Activated naive CD4-positive, alpha-beta T cell treated with anti-CD3 and anti-CD28 coated beads for 36 hours (primary cell): ENCODE measurements at regions of chr16 and their contacts with region 1.

Region 1: GRCh38 chr16:22190776-22191531 is 15.1 kb upstream of the EEF2K start:
- DNase-seq: peak; percentile 99
- H3K4me3 Mint-ChIP-seq: peak overlapping the region; percentile 83
- H3K27ac Mint-ChIP-seq: peak overlapping the region; percentile 98
- H3K4me1 Mint-ChIP-seq: peaks cover 60% of the 10 kb centered on the region
- H3K27me3 Mint-ChIP-seq: no peaks in the 10 kb centered on the region

Region 2: DNA sequence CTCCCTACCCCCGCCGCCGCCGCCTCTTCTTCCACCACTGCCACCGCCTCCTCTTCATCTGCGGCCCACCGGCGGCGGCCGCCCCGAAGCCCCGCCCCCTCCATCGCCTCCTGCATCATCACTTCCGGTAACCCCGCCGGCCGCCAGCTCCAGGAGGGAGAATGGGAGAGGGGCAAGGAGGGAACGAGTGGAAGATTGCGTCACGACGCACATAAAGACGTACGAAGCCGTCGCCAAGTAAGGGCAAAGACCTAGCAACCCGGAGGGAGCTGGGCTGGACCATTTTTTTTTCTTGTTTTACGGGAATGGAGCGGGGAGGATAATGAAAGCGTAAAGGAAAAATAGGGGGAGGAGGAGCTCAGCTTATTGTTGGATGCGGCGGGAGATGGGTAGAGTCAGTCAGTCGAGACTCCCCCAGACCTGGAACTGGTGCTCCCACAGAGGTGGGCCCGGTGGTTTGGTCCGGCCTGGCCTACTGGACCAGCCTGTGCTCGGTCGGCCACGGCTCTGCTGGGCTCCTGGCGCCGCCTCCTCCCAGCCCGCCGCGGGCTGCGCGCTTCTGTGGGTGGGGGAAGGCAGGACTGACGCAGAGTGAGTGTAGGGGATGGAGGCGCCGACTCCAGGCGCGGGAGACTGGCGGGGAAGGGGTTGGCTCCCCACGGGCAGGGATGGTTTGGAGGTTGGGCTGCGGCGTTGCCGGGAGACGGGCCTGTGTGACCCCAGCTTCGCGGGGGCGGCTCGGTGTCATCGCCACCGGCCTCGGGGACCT is 1290.5 kb before region 1 on chr16 and contains the starts of genes DCUN1D3 and LYRM1:
- CTCF ChIA-PET with region 1: no interaction called
- intact Hi-C with region 1: loop called (anchors 10 kb)
- DNase-seq: peak; percentile 88
- H3K4me3 Mint-ChIP-seq: peak within 1 kb of the TSS; percentile 96
- H3K27ac Mint-ChIP-seq: peak within 1 kb of the TSS; percentile 98
- H3K4me1 Mint-ChIP-seq: peaks cover 59% of the 10 kb centered on the region
- H3K27me3 Mint-ChIP-seq: no peaks in the 10 kb centered on the region
- total RNA-seq, gene DCUN1D3: 3.0 to 3.4 TPM
- total RNA-seq, gene LYRM1: 20.4 to 20.8 TPM

Region 3: DNA sequence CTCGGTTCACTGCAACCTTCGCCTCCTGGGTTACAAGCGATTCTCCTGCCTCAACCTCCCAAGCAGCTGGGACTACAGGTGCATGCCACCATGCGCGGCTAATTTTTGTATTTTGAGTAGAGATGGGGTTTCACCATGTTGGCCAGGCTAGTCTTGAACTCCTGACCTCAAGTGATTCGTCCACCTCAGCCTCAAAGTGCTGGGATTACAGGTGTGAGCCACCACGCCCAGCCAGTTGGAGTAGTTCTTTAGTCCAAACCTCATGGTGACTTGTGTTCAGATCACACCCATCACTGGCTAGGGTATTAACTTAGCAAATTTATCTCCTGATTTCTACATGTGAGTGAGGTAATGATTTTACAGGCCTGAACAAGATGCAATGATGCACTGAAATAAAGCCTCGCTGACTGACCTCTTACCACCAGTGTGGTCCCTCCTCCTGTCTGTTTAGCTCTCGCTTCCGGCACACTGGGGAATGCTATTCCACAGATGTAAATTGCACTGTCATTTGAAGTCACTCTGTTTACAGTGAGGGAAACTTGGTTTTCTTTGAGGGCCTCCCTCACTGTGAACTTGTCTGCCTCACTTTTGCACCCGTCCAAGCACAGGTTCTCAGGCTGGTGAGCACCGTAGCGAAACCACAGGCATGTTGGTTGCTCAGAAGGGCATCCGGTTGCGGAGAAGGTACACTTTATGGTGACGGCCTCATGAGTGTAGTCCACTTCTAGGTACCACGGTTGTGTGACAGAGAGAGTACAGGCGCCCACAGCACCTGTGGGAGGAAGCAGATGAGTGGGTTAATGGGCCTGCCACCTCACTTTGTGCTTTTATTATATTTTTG is 544.0 kb before region 1 on chr16:
- CTCF ChIA-PET with region 1: no interaction called
- intact Hi-C with region 1: loop called (anchors 1 kb)
- DNase-seq: peak; percentile 91
- H3K4me3 Mint-ChIP-seq: peak overlapping the region; percentile 25
- H3K27ac Mint-ChIP-seq: peak overlapping the region; percentile 76
- H3K4me1 Mint-ChIP-seq: peaks cover 49% of the 10 kb centered on the region
- H3K27me3 Mint-ChIP-seq: no peaks in the 10 kb centered on the region

Region 4: DNA sequence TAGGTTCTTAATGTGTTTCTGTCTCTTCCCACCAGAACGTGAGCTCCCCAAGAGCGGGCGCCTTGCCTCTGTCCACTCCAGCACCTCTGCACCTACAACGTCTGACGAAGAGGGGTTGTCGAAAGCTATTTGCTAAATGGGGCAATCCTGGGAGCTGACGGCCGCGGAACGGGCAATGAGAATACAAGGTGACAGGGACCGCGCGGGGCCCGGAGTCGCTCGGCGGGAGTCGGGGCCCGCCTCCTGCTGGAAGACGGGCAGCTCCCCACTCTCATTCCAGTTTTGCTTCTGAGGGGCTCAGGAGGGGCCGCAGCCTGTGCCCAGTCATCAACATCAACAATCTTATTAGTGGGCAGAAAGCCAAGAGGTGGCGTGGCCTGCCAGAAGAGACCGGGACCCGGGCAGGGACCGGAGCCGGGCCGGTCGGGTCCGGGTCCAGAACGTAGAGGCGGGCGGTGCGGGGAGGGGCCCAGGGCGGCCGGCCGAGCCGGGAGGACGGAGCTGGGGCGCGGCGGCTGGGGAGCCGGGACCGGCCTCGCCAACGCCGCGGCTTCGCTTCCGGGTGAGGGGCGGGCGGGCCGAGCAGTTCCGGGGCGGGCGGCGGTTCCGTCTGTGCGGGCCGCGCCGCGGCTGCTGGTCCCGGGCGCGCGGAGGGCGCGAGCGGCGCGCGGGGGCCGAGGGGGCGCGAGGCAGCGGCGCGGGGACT is 183.3 kb before region 1 on chr16 and contains the start of gene MOSMO:
- CTCF ChIA-PET with region 1: interaction called, 33 read pairs
- intact Hi-C with region 1: no loop called
- DNase-seq: peak; percentile 64
- H3K4me3 Mint-ChIP-seq: peak within 1 kb of the TSS; percentile 85
- H3K27ac Mint-ChIP-seq: peak within 1 kb of the TSS; percentile 73
- H3K4me1 Mint-ChIP-seq: peaks cover 40% of the 10 kb centered on the region
- H3K27me3 Mint-ChIP-seq: no peaks in the 10 kb centered on the region
- total RNA-seq, gene MOSMO: 6.5 to 6.7 TPM

Region 5: GRCh38 chr16:22206013-22206841 is 15.3 kb after region 1 on chr16 and contains the start of gene EEF2K:
- CTCF ChIA-PET with region 1: interaction called, 7 read pairs
- intact Hi-C with region 1: loop called (anchors 1 kb)
- DNase-seq: peak; percentile 88
- H3K4me3 Mint-ChIP-seq: peak within 1 kb of the TSS; percentile 94
- H3K27ac Mint-ChIP-seq: peak within 1 kb of the TSS; percentile 88
- H3K4me1 Mint-ChIP-seq: peaks cover 41% of the 10 kb centered on the region
- H3K27me3 Mint-ChIP-seq: no peaks in the 10 kb centered on the region
- total RNA-seq, gene EEF2K: 9.8 to 10.0 TPM

Region 6: GRCh38 chr16:22250522-22250921 is 59.6 kb after region 1 on chr16:
- CTCF ChIA-PET with region 1: no interaction called
- intact Hi-C with region 1: no loop called
- DNase-seq: no peak
- H3K4me3 Mint-ChIP-seq: no peak overlapping the region
- H3K27ac Mint-ChIP-seq: no peak overlapping the region
- H3K4me1 Mint-ChIP-seq: peaks cover 2% of the 10 kb centered on the region
- H3K27me3 Mint-ChIP-seq: no peaks in the 10 kb centered on the region

Region 7: DNA sequence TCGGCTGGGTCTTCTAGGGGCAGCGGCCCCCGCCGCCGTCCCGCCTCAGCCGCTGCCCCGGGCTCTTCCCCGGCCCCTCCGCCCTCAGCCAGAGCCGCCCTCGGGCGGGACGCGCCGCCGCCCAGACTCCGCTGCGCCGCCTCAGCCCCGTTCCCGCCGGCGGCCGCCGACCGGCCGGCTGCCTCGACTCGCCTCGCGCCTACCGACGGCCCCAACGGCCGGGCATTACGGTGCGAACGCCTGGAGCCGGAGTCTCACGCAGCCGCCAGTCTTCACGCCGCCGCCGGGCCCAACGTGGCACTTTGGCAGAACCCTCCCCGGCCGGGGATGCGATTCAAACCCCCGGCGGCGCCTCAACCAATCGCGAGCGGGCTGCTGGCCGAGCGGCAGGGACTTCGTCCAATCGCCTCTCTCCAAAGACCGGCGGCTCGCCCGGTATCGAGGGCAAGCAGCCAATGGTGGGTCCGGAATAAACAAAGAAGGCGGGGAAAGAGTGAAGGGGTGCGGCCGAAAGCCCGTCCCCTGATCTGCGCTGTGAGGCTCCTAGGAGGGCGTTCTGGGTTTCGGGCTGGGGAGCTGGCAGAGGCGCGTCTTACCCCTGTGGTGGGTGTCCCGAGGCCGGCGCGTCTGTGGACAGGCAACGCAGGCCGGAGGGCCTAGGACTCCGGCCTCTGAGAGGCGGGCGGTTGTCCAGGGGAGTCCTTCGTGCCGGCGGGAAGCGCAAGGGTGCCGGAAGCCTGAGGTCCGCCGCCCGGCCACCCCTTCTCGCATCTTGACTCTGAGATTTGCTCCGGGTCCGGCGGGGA is 183.6 kb after region 1 on chr16 and contains the start of gene CDR2:
- CTCF ChIA-PET with region 1: interaction called, 4 read pairs
- intact Hi-C with region 1: loop called (anchors 1 kb)
- DNase-seq: peak; percentile 99
- H3K4me3 Mint-ChIP-seq: peak within 1 kb of the TSS; percentile 92
- H3K27ac Mint-ChIP-seq: peak within 1 kb of the TSS; percentile 89
- H3K4me1 Mint-ChIP-seq: peaks cover 37% of the 10 kb centered on the region
- H3K27me3 Mint-ChIP-seq: no peaks in the 10 kb centered on the region
- total RNA-seq, gene CDR2: 42.5 to 42.8 TPM